SK-MEL-5 (cell line): ENCODE measurements at regions of chr6 and their contacts with region 1.

Region 1: GRCh38 chr6:53524455-53524815 is 20.5 kb downstream of the GCLC start:
- DNase-seq: no peak

Region 2: DNA sequence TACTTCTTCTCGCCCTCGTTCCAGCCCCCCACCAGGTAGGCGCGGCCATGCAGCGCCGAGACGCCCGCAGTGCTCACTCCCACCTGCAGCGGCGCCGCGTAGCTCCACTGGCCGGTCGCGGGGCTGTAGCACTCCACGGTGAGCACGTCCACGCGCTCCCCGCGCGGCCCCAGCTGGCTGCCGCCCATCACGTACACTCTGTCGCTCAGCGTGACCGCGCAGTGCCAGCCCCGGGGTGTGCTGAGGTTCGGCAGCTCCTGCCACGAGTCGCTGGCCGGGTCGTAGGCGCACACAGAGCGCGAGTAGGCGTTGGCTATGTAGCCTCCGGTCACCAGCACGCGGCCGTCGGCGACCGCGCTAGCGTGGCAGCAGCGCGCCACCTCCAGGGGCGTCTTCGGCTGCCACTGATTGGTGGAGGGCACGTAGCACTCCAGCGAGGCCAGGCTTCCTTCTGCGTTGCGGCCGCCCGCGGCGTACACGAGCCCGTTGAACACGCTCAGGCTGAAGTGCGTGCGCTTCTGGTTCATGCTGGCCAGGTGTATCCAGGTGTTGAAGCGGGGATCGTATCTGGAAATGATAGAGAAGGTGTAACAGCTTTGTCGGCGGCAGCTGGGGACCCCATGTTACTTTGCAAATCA is 127.4 kb after region 1 on chr6:
- in situ Hi-C with region 1: loop called (anchors 25 kb)
- DNase-seq: peak; percentile 75

Region 3: DNA sequence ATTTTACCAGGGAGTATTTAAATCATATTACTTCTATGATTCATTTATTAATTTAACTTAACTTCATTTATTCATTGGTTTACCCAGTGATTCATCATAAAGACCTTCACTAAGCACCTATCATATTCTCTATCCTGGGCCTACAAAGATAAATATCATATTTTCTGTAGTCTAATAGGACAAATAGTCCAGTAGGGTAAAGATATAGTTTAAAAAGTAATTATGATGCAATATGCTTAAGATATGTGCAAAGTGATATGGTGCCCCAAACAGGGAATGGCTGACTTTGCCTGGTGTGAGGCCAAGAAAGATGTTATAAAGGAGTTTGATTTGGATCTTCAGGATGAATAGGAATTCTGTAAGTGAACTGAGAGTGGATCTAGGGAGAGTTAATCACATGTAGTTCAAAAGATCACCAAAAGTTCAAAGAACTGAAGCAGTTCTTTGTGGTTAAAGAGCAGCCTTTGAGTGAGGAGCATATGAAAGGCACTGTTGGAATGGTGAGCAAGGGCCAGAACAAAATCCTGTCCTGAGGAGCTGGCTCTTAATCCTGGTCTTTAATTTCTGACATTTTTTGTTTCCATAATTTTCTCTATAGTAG is 632.3 kb after region 1 on chr6:
- in situ Hi-C with region 1: no loop called
- DNase-seq: peak; percentile 51